Prostate gland (tissue), 2 donors: ENCODE measurements at regions of chr16 and their contacts with region 1.

Region 1: GRCh38 chr16:67183627-67184328 is at the start of gene MATCAP1:
- DNase-seq: peak; percentile 96
- H3K4me3 ChIP-seq: peak within 1 kb of the TSS; percentile 70 to 82
- H3K27ac ChIP-seq: peak within 1 kb of the TSS; percentile 98
- H3K4me1 ChIP-seq: peaks cover 14% of the 10 kb centered on the region
- H3K27me3 ChIP-seq: no peaks in the 10 kb centered on the region
- CTCF ChIP-seq: peak in 1 of 4 experiments; percentile 19
- POLR2A ChIP-seq: peak; percentile 45
- total RNA-seq, gene MATCAP1: 13.9 to 28.9 TPM

Region 2: GRCh38 chr16:66977341-66978113 is 206.3 kb before region 1 on chr16:
- intact Hi-C with region 1: loop called (anchors 2 kb)
- DNase-seq: peak; percentile 86
- H3K4me3 ChIP-seq: no peak overlapping the region
- H3K27ac ChIP-seq: no peak overlapping the region
- H3K4me1 ChIP-seq: no peaks in the 10 kb centered on the region
- H3K27me3 ChIP-seq: no peaks in the 10 kb centered on the region
- CTCF ChIP-seq: peak; percentile 94 to 98 (median 96)
- POLR2A ChIP-seq: no peak

Region 3: DNA sequence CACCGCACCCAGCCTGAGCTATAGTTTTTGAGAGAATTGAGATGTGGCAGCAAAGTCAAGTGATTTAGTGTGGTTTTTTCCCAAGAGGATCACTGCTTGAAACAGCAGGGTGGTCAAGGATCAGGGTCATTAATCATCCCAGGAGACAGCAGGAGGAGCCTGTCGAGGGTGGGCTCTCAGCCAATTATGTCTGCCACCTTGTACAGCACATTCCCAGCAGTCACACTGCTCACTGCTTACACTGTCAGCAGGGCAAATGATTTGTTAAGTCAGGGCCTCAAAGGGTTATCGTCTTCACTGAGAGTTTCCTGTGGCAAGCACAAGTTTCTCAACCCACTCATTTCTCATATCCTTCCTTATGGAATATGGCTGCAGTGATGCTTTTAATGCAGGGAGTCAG is 46.2 kb before region 1 on chr16:
- intact Hi-C with region 1: no loop called
- DNase-seq: no peak
- H3K4me3 ChIP-seq: no peak overlapping the region
- H3K27ac ChIP-seq: no peak overlapping the region
- H3K4me1 ChIP-seq: no peaks in the 10 kb centered on the region
- H3K27me3 ChIP-seq: no peaks in the 10 kb centered on the region
- CTCF ChIP-seq: no peak
- POLR2A ChIP-seq: no peak